ENCODE measurements at regions of chr2 and their contacts with region 1.

Region 1: DNA sequence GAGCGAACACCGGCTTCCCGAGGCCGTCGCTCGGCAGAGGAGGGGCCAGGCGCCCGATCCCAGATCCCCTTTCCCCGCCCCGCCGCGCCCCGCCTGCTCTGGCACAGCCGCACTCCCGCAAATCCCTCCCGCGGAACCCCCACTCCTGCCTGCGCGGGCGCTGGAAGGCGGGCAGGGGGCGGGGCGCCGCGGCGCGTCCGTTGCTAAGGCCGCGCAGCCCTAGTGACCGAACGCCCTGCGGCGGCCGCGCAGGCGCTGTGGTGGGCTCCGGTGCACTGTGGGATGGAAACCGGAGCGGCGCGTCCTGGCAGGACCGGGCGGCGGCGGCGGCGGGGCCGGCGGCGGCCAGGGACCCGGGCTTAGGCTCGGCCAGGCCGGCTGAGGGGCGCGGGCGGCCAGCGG is at the start of gene TRAF3IP1:
- DNase-seq: peak; percentile 91
- ATAC-seq: peak; percentile 96
- H3K4me3 Mint-ChIP-seq: peak within 1 kb of the TSS; percentile 70
- H3K27ac Mint-ChIP-seq: no peak within 1 kb of the TSS
- H3K4me1 Mint-ChIP-seq: peaks cover 23% of the 10 kb centered on the region
- H3K27me3 Mint-ChIP-seq: peaks cover 3% of the 10 kb centered on the region
- total RNA-seq, gene TRAF3IP1: 8.5 to 9.8 TPM

Region 2: GRCh38 chr2:238187618-238188548 is 132.4 kb before region 1 on chr2:
- CTCF ChIA-PET with region 1: no interaction called
- POLR2A ChIA-PET with region 1: no interaction called
- intact Hi-C with region 1: no loop called
- DNase-seq: no peak
- ATAC-seq: no peak
- H3K4me3 Mint-ChIP-seq: no peak overlapping the region
- H3K27ac Mint-ChIP-seq: no peak overlapping the region
- H3K4me1 Mint-ChIP-seq: peaks cover 3% of the 10 kb centered on the region
- H3K27me3 Mint-ChIP-seq: no peaks in the 10 kb centered on the region

Region 3: DNA sequence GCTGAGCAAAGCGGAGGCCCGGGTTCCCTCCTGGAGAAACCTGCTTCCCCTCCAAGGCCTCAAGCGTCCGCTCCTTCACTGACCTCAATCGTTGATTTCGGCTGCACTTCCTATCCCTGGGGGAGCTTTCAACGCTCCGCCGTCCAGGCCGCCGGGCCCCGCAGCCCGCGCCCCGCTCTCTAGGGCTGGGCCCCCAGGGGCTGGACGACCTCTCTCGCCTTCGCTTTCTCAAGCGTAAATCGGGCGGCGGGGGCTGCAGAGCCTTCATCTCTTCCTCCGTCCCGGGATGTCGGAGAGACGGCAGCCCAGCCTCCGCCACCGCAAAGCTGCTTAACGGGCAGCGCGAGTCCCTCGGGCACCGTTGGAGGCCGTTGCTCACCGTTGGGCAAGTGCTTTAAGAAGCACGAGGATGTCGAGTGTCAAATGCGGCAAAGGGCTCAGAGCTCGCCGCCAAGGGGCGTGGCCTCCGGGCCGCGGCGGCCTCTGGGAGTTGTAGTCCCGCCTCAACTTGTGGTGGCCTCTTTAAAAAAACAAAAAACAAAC is 88.9 kb before region 1 on chr2:
- CTCF ChIA-PET with region 1: no interaction called
- POLR2A ChIA-PET with region 1: no interaction called
- intact Hi-C with region 1: loop called in 1 of 2 experiments (anchors 1 kb)
- DNase-seq: peak; percentile 89
- ATAC-seq: peak; percentile 90
- H3K4me3 Mint-ChIP-seq: peak overlapping the region; percentile 74
- H3K27ac Mint-ChIP-seq: peak overlapping the region; percentile 62
- H3K4me1 Mint-ChIP-seq: peaks cover 23% of the 10 kb centered on the region
- H3K27me3 Mint-ChIP-seq: peaks cover 14% of the 10 kb centered on the region

Region 4: GRCh38 chr2:238239872-238240751 is 80.1 kb before region 1 on chr2 and contains the start of gene HES6:
- CTCF ChIA-PET with region 1: no interaction called
- POLR2A ChIA-PET with region 1: no interaction called
- intact Hi-C with region 1: loop called in 1 of 2 experiments (anchors 2 kb)
- DNase-seq: peak; percentile 87
- ATAC-seq: peak; percentile 86
- H3K4me3 Mint-ChIP-seq: peak within 1 kb of the TSS; percentile 77
- H3K27ac Mint-ChIP-seq: no peak within 1 kb of the TSS
- H3K4me1 Mint-ChIP-seq: peaks cover 5% of the 10 kb centered on the region
- H3K27me3 Mint-ChIP-seq: peaks cover 21% of the 10 kb centered on the region
- total RNA-seq, gene HES6: 1.8 to 4.0 TPM

Measured in activated CD4-positive, alpha-beta T cell treated with anti-CD3 and anti-CD28 coated beads for 36 hours (primary cell).